Motor neuron (in vitro differentiated cells): ENCODE measurements at regions of chr1 and their contacts with region 1.

Region 1: DNA sequence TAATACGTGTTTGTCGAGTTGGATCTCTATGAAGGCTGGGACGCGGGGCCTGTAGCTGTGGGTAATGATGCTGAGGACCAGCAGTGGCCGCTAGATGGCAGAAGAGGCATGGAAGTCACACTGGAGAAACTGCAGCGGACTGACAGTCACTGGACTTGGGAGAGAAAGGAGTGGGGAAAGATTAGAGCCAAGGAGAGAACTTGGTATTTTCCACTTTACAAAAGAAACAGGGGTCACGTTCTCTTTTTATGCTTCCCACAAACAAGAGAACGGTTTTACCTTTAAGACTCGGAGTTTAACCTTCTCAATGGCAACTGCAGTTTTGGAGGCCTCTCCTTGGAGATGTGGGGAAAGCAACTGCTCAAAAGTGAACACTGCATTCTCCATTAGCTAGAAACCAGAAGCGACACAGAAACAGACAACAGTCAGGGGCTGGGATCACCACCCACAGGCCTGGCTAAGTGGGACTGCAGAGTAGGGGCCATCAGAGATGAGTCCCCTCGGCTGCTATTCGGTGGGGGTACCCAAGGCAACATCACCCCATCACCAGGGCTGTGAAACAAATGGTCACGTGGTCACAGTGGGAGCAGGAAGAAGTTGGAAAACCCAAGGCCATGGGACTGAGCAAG is 51.1 kb upstream of the EDEM3 start:
- ATAC-seq: peak; percentile 99 to 100 (median 100)
- H3K4me3 ChIP-seq: no peak overlapping the region
- H3K27ac ChIP-seq: no peak overlapping the region
- H3K4me1 ChIP-seq: no peaks in the 10 kb centered on the region

Region 2: DNA sequence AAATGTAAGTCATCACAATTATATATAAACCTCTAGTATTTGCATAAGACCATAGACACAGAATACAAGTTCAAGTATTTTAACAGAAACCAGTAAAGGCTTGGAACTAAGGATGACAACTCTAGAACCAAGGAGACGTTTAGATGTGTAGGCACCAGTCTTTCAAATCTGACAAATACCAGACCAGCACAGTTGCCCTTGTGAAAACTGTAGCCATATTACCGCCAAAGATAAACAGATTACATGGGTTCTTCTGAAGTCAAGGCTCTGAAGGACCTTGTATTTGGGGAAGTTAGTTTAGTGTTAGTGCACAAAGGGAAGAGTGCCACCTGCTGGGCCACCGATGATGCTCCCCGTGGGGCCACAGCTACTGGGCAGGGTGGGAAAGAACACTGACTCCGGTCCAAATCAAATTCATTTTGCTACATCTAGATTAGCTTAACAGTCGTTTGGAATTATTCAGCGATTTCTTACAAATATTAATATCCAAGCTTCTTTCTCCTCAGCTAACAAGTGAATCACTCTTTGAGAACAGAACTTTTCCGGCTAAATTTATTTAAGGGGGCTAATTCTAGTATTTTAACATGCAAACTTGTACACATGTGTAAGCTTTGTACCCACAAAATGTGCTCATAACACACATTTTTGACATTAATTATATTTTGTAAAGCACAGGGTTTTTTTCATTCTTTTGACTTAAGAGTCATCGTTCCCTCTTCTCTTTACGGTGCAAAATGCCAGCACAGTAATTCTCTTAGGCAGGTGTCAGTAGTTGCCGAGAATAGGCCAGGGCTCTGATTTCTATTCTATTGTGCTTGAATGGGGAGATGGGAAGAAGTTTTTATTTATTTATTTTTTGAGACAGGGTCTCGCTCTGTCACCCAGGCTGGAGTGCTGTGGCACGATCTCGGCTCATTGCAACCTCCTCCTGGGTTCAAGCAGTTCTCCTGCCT is 176.5 kb after region 1 on chr1:
- in situ Hi-C with region 1: loop called in 3 of 9 experiments (anchors 10 to 25 kb)
- ATAC-seq: peak; percentile 38 to 99 (median 73)
- H3K4me3 ChIP-seq: no peak overlapping the region
- H3K27ac ChIP-seq: no peak overlapping the region
- H3K4me1 ChIP-seq: no peaks in the 10 kb centered on the region

Region 3: DNA sequence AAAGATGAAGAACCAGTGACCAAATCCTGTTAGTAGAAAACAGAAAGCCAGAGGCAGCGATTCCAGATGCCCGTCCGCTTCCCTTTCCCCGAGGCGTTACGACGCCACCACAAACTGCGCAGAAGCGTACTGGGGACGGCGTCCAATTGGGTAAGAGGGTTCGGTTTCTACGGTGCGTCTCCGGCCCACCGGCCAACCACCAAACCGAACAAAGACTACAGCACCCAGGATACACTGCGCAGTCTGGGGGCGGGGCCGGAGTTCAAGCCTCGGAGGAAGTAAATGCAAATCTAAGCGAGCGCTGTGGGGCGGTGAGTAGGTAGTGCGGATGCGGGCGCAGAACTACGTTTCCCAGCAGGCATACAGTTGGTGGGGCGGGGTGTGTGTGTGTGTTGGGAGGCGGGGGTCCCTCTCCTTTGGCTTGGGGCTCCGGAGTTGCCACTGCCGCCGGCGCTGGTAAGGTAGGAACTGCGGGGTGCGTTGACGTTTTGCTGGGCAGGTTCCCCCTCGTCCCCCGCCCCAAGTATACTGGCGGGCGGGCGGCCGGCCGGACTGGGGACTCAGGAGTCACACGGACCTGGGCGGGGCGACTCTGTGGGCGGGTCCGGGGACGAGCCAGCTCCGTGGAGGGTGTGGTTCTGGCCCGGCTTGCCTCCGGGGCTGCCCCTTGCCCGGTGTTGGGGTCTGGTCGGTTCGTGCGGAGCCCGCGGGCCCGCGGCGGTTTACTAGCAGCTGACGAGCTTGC is 351.2 kb after region 1 on chr1 and contains the starts of genes SWT1 and TRMT1L:
- in situ Hi-C with region 1: loop called in 4 of 9 experiments (anchors 10 to 25 kb)
- ATAC-seq: peak; percentile 89 to 95 (median 94)
- H3K4me3 ChIP-seq: peak within 1 kb of the TSS; percentile 87 to 93 (median 88)
- H3K27ac ChIP-seq: peak within 1 kb of the TSS; percentile 96
- H3K4me1 ChIP-seq: peaks cover 4 to 13% of the 10 kb centered on the region in 2 donors
- total RNA-seq, gene SWT1: 5.2 to 17.0 (median 10.7) TPM
- total RNA-seq, gene TRMT1L: 8.4 to 25.7 (median 20.8) TPM

Region 4: DNA sequence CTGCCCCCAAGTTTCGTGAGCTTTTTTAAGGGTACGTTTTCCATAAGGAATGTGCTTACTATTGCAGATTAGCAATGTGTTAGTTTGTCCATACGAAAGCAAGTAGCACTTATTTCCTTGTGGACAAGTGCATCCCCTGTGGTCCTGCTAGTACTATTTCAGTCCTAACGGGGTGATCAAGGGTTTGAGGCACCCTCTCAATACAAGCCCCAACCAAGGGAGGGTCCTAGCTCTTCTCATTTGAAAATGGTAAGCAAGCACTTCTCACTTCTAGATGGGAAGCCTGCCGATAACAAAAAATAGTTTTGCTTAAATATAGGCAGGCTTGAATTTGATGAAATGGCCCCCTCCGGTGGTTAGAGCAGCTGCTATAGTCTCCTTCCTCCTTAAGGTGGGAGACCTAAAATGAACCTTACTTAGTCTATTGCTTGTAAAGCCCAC is 864.4 kb after region 1 on chr1:
- in situ Hi-C with region 1: loop called in 2 of 9 experiments (anchors 25 kb)
- ATAC-seq: peak; percentile 32 to 91 (median 56)
- H3K4me3 ChIP-seq: no peak overlapping the region
- H3K27ac ChIP-seq: no peak overlapping the region
- H3K4me1 ChIP-seq: no peaks in the 10 kb centered on the region

Region 5: GRCh38 chr1:186212544-186213226 is 1406.9 kb after region 1 on chr1:
- in situ Hi-C with region 1: loop called in 1 of 9 experiments (anchors 25 kb)
- ATAC-seq: peak; percentile 80 to 98 (median 88)
- H3K4me3 ChIP-seq: no peak overlapping the region
- H3K27ac ChIP-seq: no peak overlapping the region
- H3K4me1 ChIP-seq: no peaks in the 10 kb centered on the region